Aorta (tissue), 5 donors: ENCODE measurements at regions of chr14 and their contacts with region 1.

Region 1: GRCh38 chr14:75906676-75907280 is 75.0 kb downstream of the TGFB3 start:
- DNase-seq: peak; percentile 71 to 84
- ATAC-seq: peak; percentile 81
- H3K4me3 ChIP-seq: no peak overlapping the region
- H3K27ac ChIP-seq: no peak overlapping the region
- H3K4me1 ChIP-seq: peaks cover 0 to 2% of the 10 kb centered on the region in 2 donors
- H3K27me3 ChIP-seq: no peaks in the 10 kb centered on the region

Region 2: GRCh38 chr14:75709207-75709812 is 197.5 kb before region 1 on chr14:
- intact Hi-C with region 1: loop called in 1 of 2 experiments (anchors 10 kb)
- DNase-seq: peak; percentile 79 to 82
- ATAC-seq: peak; percentile 87
- H3K4me3 ChIP-seq: no peak overlapping the region
- H3K27ac ChIP-seq: no peak overlapping the region
- H3K4me1 ChIP-seq: peaks cover 0 to 5% of the 10 kb centered on the region in 2 donors
- H3K27me3 ChIP-seq: no peaks in the 10 kb centered on the region

Region 3: DNA sequence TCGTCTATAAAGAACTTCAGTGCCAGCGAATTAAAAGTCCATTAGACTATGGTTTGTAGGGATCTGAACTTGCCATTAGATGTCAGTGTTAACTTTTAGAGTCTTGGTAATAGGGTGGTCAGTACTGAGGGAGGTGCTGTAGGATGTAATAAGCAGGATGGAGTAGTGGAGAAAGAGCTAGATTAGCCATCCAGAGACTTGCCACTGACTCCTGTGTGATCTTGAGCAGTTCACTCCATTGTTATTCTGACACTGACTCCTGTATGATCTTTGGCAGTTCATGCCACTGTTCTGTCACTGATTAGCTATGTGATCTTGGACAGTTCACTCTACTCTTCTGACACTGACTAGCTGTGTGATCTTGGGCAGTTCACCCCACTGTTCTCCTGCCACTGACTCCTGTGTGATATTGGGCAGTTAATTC is 112.2 kb before region 1 on chr14:
- intact Hi-C with region 1: loop called in 1 of 2 experiments (anchors 10 kb)
- DNase-seq: no peak
- ATAC-seq: peak; percentile 93
- H3K4me3 ChIP-seq: no peak overlapping the region
- H3K27ac ChIP-seq: no peak overlapping the region
- H3K4me1 ChIP-seq: no peaks in the 10 kb centered on the region
- H3K27me3 ChIP-seq: no peaks in the 10 kb centered on the region

Region 4: GRCh38 chr14:76050797-76051392 is 144.1 kb after region 1 on chr14:
- intact Hi-C with region 1: loop called (anchors 10 kb)
- DNase-seq: no peak
- ATAC-seq: no peak
- H3K4me3 ChIP-seq: no peak overlapping the region
- H3K27ac ChIP-seq: no peak overlapping the region
- H3K4me1 ChIP-seq: no peaks in the 10 kb centered on the region
- H3K27me3 ChIP-seq: no peaks in the 10 kb centered on the region